Activated T-helper 1 cell treated with anti-CD3 and anti-CD28 coated beads, Interleukin-12 subunit alpha, Interleukin-12 subunit beta, Interleukin-2, Interleukin-4 antibody, amounts not matched to agents 30 ng/mL and 10 ng/mL and 1 ng/mL, durations not matched to agents 14 hours and 24 hours and 36 hours (primary cell): ENCODE measurements at regions of chr19 and their contacts with region 1.

Region 1: GRCh38 chr19:55339048-55339888 is at the start of gene KMT5C:
- DNase-seq: peak; percentile 100
- H3K4me3 Mint-ChIP-seq: peak within 1 kb of the TSS; percentile 96
- H3K27ac Mint-ChIP-seq: peak within 1 kb of the TSS; percentile 99
- H3K4me1 Mint-ChIP-seq: peaks cover 14% of the 10 kb centered on the region
- H3K27me3 Mint-ChIP-seq: peaks cover 9% of the 10 kb centered on the region
- total RNA-seq, gene KMT5C: 29.1 and 29.9 TPM in 2 replicates

Region 2: DNA sequence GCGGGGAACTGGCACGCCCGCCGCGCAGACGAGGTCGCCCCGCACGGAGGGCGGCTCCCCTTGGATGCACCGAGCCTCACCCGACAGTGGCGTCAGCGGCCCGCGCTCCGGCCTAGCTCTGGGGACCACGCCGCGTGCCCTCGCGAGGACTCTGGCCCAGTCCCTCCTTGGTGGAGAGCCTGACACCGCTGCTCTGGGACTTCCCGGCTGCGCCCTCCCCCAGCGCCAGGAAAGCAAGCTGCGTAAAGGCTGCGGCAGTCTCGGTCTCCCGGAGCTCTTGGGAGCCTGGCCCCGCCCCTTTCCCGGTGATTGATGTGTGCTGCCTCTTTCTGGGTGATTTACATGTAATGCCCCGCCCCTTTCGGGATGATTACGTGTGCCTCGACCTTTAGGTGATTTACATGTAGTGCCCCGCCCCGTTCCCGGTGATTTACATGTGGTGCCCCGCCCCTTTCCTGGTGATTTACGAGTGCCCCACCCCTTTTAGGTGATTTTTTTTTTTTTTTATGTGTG is 875.7 kb before region 1 on chr19 and contains the start of gene LENG9:
- intact Hi-C with region 1: loop called (anchors 5 kb)
- DNase-seq: peak; percentile 96
- H3K4me3 Mint-ChIP-seq: peak within 1 kb of the TSS; percentile 84
- H3K27ac Mint-ChIP-seq: peak within 1 kb of the TSS; percentile 89
- H3K4me1 Mint-ChIP-seq: peaks cover 25% of the 10 kb centered on the region
- H3K27me3 Mint-ChIP-seq: peaks cover 21% of the 10 kb centered on the region
- total RNA-seq, gene LENG9: 8.4 and 11.5 TPM in 2 replicates

Region 3: DNA sequence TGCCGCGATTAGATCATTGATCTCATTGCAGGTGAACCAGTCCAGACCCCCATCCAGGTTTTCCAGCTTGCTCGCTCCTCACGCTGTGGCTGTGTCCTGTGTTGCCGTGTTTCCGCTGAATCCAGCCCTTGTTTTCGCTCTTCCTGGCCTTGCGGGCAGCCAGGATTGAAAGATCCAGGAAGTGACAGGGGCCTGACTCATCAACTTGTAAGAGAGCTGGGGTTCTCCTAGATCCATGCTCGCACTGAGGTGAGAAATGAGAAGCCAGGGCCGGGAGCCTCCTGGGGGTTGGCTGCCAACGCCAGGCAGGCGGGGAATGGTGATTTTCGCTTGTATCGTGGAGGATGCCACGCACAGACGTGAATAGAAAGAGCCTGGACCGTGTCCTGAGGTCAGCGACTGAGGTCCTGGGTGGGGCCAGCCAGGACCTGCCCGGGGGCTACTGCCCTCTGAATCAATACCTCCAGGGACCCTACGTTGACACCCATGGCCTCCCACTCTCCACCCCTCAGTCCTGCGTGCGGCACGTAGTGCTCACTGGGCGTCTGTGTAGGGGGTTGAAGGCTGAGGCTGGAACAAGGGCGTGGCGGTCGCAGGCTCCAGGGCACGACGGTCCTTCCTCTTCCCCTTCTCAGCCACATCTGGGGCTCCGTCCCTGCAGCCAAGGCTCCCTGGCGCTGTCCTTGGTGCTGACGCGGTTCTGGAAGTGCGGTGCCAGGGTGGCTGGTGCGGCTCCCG is 122.6 kb before region 1 on chr19:
- intact Hi-C with region 1: loop called (anchors 1 kb)
- DNase-seq: peak; percentile 31
- H3K4me3 Mint-ChIP-seq: peak overlapping the region; percentile 63
- H3K27ac Mint-ChIP-seq: peak overlapping the region; percentile 67
- H3K4me1 Mint-ChIP-seq: peaks cover 11% of the 10 kb centered on the region
- H3K27me3 Mint-ChIP-seq: peaks cover 11% of the 10 kb centered on the region

Region 4: DNA sequence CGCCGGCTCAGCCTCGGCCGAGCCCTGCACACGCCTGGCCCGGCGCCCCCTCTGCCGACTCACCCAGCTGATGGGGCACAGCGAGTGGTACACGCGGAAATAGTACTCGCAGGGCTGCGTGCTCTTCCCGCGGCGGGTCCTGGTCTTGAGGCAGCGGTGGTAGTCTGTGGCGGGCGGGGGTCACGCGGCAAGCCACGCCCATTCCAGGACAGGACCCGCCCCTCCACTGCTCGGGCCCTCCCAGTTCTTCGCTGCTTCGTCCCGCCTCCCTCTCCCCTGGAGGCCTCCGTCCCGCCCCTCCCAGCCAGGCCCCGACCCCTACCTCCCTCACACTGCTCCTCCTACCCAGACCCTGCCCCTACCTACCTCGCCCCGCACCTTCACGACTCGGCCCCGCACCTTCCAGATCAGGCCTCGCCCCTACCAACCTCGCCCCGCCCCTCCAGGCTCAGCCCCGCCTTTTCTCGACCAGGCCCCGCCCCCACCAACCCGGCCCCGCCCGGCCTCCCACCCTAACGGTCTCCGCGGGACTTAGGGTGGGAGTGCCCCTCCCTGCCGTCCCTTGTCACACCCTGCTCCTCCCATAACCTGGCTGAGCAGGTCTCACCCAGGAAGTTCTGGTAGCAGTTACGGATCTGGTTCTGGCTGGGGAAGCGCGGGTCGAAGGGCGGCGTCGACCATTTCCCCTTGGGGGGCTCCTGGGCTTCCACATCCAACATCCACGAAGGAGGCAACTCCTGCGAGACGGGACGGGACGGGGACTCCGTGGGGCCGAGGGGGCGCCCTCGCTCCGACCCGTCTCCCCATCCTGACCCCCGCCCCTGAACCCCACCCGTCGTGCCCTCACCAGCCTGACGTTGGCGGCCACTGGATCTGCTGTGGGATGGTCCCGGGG is 14.8 kb after region 1 on chr19:
- intact Hi-C with region 1: loop called (anchors 1 kb)
- DNase-seq: peak; percentile 45
- H3K4me3 Mint-ChIP-seq: peak overlapping the region; percentile 82
- H3K27ac Mint-ChIP-seq: no peak overlapping the region
- H3K4me1 Mint-ChIP-seq: peaks cover 26% of the 10 kb centered on the region
- H3K27me3 Mint-ChIP-seq: peaks cover 44% of the 10 kb centered on the region

Region 5: DNA sequence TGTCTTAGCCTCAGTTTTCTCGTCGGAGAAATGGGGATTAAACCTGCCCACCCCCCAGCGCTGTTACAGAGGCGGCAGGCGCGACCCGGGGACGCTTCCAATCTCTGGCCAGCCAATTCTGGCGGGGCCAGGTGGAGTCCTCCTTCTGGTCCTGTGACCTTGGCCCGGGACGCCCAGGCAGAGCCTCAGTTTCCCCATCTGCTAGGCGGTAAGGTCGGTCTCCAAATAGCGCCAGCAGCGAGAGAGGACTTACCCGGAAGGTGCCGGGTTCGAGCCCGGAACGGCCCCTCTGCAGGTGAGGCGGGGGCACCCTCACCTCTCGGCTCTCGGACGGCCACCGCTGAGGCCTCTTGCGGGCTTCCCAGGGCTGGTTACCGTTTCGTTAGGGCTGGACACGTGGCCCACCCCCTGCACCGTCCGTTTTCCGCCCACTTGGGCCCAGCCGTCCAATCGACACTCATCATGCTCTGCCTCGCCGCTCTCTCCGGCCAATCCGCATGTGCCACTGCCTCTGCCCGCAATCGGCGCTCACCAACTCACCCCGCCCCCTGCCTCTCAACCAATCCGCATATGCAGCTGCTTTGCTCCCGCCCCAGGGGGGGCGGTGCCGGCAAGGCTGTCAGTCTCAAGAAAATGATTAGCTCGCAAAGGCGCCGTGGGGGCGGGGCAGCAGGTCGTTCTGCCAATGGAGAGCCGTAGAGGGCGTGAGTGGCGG is 122.1 kb after region 1 on chr19 and contains the start of gene ISOC2:
- intact Hi-C with region 1: loop called (anchors 1 kb)
- DNase-seq: peak; percentile 100
- H3K4me3 Mint-ChIP-seq: peak within 1 kb of the TSS; percentile 81
- H3K27ac Mint-ChIP-seq: peak within 1 kb of the TSS; percentile 77
- H3K4me1 Mint-ChIP-seq: peaks cover 5% of the 10 kb centered on the region
- H3K27me3 Mint-ChIP-seq: peaks cover 2% of the 10 kb centered on the region
- total RNA-seq, gene ISOC2: 31.3 and 34.3 TPM in 2 replicates